CD4-positive, alpha-beta T cell (primary cell): ENCODE measurements at regions of chr6 and their contacts with region 1.

Region 1: GRCh38 chr6:30730601-30731435 is 10.7 kb downstream of the TUBB start:
- DNase-seq: peak; percentile 74 to 92 (median 84)
- ATAC-seq: peak; percentile 99
- H3K4me3 ChIP-seq: peak overlapping the region; percentile 25
- H3K4me3 Mint-ChIP-seq: peak overlapping the region; percentile 50
- H3K27ac ChIP-seq: peak overlapping the region in 1 of 2 donors; percentile 14
- H3K27ac Mint-ChIP-seq: peak overlapping the region; percentile 67
- H3K4me1 ChIP-seq: peaks cover 36% of the 10 kb centered on the region
- H3K4me1 Mint-ChIP-seq: peaks cover 46% of the 10 kb centered on the region
- H3K27me3 ChIP-seq: no peaks in the 10 kb centered on the region
- H3K27me3 Mint-ChIP-seq: no peaks in the 10 kb centered on the region
- CTCF ChIP-seq: peak; percentile 84

Region 2: DNA sequence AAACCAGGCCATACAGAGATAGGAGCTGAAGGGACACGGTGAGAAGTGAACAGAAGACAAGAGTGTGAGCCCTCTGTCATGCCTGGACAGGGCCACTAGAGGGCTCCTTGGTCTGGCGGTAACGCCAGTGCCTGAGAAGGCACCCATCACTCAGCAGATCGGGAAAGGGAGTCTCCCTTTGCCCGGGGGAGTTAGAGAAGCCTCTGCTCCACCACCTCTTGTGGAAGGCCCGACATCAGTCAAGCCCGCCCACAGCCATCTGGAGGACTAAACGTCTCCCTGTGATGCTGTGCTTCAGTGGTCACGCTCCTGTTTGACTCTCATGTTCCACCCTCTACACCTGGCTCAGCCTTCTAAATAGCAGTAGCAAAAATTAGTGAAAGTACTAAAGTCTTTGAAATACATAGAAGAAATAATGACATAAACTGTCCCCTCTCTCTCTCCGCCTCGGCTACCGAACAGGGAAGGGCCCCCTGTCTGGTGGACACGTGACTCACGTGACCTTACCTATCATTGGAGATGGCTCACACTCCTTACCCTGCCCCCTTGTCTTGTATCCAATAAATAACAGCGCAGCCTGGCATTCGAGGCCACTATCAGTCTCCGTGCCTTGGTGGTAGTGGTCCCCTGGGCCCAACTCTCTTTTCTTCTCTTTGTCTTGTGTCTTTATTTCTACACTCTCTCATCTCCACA is 319.2 kb before region 1 on chr6:
- CTCF ChIA-PET with region 1: interaction called, 3 read pairs
- POLR2A ChIA-PET with region 1: no interaction called
- intact Hi-C with region 1: loop called in 1 of 2 experiments (anchors 2 kb)
- DNase-seq: peak; percentile 32 to 77 (median 52)
- ATAC-seq: peak; percentile 63
- H3K4me3 ChIP-seq: no peak overlapping the region
- H3K4me3 Mint-ChIP-seq: no peak overlapping the region
- H3K27ac ChIP-seq: no peak overlapping the region
- H3K27ac Mint-ChIP-seq: no peak overlapping the region
- H3K4me1 ChIP-seq: peaks cover 4% of the 10 kb centered on the region
- H3K4me1 Mint-ChIP-seq: peaks cover 7% of the 10 kb centered on the region
- H3K27me3 ChIP-seq: peaks cover 0 to 31% of the 10 kb centered on the region in 2 experiments
- H3K27me3 Mint-ChIP-seq: peaks cover 70% of the 10 kb centered on the region
- CTCF ChIP-seq: peak; percentile 76

Region 3: DNA sequence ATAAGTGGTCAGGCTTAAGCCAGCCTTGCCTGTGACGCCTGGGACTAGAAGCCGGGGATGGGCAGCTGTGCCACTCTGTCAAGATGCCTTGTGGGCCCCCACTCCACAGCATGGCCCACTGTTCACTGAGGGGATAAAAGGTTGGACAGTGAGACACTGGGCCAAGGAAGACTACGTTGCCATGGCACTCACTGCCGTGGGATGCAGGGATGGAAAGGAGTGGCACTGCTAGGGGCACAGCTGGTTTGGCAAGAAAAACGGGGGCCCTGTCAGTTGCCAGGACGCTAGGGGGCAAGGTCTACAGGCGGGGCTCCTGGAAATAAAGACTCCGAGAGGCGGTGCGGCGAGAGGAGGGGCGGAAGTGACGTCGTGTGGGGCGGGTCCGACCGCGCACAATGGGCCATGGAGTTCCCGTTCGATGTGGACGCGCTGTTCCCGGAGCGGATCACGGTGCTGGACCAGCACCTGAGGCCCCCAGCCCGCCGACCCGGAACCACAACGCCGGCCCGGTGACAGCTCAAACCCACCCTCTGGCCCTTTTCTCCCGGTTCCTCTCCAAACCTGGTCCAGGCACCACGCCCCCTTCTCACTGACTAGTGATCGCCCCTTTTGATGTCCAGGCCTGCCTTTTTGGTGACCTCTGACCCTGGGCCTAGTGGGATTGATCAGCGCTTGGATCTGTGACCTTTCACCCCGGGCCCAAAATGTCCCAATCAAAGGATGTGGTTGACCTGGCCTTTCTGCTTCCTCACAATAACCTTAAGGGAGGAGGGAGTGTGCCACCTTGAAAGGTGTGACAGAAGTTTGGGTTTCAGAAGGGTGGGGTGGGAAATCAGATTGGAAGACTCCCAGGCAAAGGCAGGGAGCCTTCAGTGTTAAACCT is 104.1 kb before region 1 on chr6 and contains the start of gene ATAT1:
- CTCF ChIA-PET with region 1: interaction called, 28 read pairs
- POLR2A ChIA-PET with region 1: no interaction called
- intact Hi-C with region 1: no loop called
- DNase-seq: peak; percentile 77 to 95 (median 86)
- ATAC-seq: peak; percentile 99
- H3K4me3 ChIP-seq: peak within 1 kb of the TSS; percentile 81
- H3K4me3 Mint-ChIP-seq: peak within 1 kb of the TSS; percentile 92
- H3K27ac ChIP-seq: peak within 1 kb of the TSS; percentile 68 to 91
- H3K27ac Mint-ChIP-seq: peak within 1 kb of the TSS; percentile 93
- H3K4me1 ChIP-seq: peaks cover 16% of the 10 kb centered on the region
- H3K4me1 Mint-ChIP-seq: peaks cover 20% of the 10 kb centered on the region
- H3K27me3 ChIP-seq: no peaks in the 10 kb centered on the region
- H3K27me3 Mint-ChIP-seq: no peaks in the 10 kb centered on the region
- CTCF ChIP-seq: peak; percentile 64
- total RNA-seq, gene ATAT1: 4.1 to 5.2 TPM

Region 4: GRCh38 chr6:30678964-30679726 is 51.7 kb before region 1 on chr6:
- CTCF ChIA-PET with region 1: interaction called, 526 read pairs
- POLR2A ChIA-PET with region 1: interaction called, 381 read pairs
- intact Hi-C with region 1: loop called in 1 of 2 experiments (anchors 2 kb)
- DNase-seq: peak; percentile 84 to 96 (median 94)
- ATAC-seq: peak; percentile 41
- H3K4me3 ChIP-seq: peak overlapping the region; percentile 99
- H3K4me3 Mint-ChIP-seq: peak overlapping the region; percentile 98
- H3K27ac ChIP-seq: peak overlapping the region; percentile 41 to 98
- H3K27ac Mint-ChIP-seq: peak overlapping the region; percentile 94
- H3K4me1 ChIP-seq: peaks cover 49% of the 10 kb centered on the region
- H3K4me1 Mint-ChIP-seq: peaks cover 47% of the 10 kb centered on the region
- H3K27me3 ChIP-seq: no peaks in the 10 kb centered on the region
- H3K27me3 Mint-ChIP-seq: no peaks in the 10 kb centered on the region
- CTCF ChIP-seq: peak; percentile 91

Region 5: DNA sequence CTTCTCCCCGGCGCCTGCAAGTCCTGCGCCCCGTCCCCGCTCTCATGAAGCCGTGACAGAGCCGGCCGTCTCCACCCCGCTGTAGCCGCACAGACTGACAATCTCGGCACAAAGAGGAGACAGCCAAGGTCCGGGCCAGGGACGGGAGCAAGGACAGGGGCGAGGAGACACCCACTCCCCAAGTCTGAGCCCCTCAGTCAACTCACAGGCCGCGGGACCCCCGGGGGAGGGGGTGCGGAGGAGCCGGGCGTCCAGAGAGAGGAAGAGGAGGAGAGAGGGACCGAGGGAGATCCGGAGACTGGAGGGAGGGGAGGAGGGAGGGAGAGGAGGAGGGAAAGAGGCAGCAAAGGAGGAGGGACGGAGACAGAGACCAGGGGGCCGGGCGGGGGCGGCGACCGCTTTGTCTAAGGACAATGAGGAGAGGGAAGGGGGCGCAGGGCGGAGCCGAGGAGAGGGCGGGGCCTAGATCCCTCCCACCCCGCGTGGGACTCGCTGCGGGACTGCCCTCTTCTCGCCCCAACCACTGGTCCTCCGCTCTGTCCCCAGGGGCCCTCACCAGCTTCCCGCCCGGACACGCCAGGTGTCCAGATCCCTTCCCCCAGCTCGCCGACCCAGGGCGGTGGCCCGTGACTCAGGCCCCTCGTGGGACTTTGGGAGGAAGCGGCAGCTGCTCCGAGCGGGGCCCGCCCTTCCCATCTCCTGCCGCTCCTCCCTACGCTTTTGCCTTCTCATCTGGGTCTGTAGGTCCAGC is 43.7 kb before region 1 on chr6:
- CTCF ChIA-PET with region 1: interaction called, 526 read pairs
- POLR2A ChIA-PET with region 1: interaction called, 381 read pairs
- intact Hi-C with region 1: no loop called
- DNase-seq: peak; percentile 44 to 84 (median 64)
- ATAC-seq: peak; percentile 19
- H3K4me3 ChIP-seq: peak overlapping the region; percentile 99
- H3K4me3 Mint-ChIP-seq: peak overlapping the region; percentile 98
- H3K27ac ChIP-seq: peak overlapping the region; percentile 96 to 98
- H3K27ac Mint-ChIP-seq: peak overlapping the region; percentile 94
- H3K4me1 ChIP-seq: peaks cover 50% of the 10 kb centered on the region
- H3K4me1 Mint-ChIP-seq: peaks cover 57% of the 10 kb centered on the region
- H3K27me3 ChIP-seq: no peaks in the 10 kb centered on the region
- H3K27me3 Mint-ChIP-seq: no peaks in the 10 kb centered on the region
- CTCF ChIP-seq: no peak

Region 6: DNA sequence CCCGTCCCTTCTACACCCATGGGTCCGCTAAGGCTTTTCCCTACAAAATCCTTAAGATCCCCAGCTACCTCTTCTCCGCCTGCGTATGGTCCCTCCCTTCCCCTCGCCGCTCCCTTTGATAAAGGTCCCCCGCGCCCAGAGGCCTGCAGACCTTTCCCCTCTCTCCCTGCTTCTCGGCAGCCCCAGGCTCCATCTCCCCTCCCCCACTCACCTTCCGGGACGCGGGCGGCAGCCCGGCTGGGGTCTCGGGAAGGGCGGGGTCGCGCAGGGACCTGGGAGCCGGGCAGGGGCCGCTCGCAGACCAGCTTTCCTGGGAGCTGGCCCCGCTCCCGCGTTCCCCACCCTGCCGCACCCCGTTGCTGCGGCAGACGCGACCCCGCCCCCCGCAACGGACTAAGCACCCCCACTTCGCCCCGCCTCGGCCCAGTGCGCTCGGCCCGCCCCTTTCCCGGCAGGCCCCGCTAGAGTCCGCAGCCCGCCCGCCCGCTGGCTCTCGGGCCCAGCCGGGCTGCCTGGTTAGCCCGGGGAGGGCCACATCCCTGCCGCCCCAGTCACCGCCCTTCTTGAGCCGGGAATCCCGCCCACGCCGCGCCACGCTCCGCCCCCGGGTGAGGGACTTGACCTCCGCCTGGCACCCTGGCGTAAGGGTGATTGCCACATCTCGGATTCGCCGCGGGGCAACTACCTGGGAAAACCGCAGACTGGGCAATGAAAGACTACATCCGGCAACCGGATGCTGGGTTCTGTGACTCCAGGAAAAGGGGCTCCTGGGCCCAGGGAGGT is 11.7 kb after region 1 on chr6 and contains the start of gene FLOT1:
- CTCF ChIA-PET with region 1: interaction called, 14 read pairs
- POLR2A ChIA-PET with region 1: interaction called, 54 read pairs
- intact Hi-C with region 1: no loop called
- DNase-seq: peak; percentile 52 to 93 (median 76)
- ATAC-seq: peak; percentile 53
- H3K4me3 ChIP-seq: peak within 1 kb of the TSS; percentile 85
- H3K4me3 Mint-ChIP-seq: peak within 1 kb of the TSS; percentile 97
- H3K27ac ChIP-seq: peak within 1 kb of the TSS; percentile 31 to 76
- H3K27ac Mint-ChIP-seq: peak within 1 kb of the TSS; percentile 91
- H3K4me1 ChIP-seq: peaks cover 66% of the 10 kb centered on the region
- H3K4me1 Mint-ChIP-seq: peaks cover 61% of the 10 kb centered on the region
- H3K27me3 ChIP-seq: no peaks in the 10 kb centered on the region
- H3K27me3 Mint-ChIP-seq: no peaks in the 10 kb centered on the region
- CTCF ChIP-seq: no peak
- total RNA-seq, gene FLOT1: 31.6 TPM

Region 7: GRCh38 chr6:30759575-30760239 is 28.9 kb after region 1 on chr6:
- CTCF ChIA-PET with region 1: no interaction called
- POLR2A ChIA-PET with region 1: no interaction called
- intact Hi-C with region 1: loop called in 1 of 2 experiments (anchors 1 kb)
- DNase-seq: no peak
- ATAC-seq: no peak
- H3K4me3 ChIP-seq: no peak overlapping the region
- H3K4me3 Mint-ChIP-seq: no peak overlapping the region
- H3K27ac ChIP-seq: no peak overlapping the region
- H3K27ac Mint-ChIP-seq: no peak overlapping the region
- H3K4me1 ChIP-seq: peaks cover 11% of the 10 kb centered on the region
- H3K4me1 Mint-ChIP-seq: peaks cover 23% of the 10 kb centered on the region
- H3K27me3 ChIP-seq: no peaks in the 10 kb centered on the region
- H3K27me3 Mint-ChIP-seq: no peaks in the 10 kb centered on the region
- CTCF ChIP-seq: no peak

Region 8: DNA sequence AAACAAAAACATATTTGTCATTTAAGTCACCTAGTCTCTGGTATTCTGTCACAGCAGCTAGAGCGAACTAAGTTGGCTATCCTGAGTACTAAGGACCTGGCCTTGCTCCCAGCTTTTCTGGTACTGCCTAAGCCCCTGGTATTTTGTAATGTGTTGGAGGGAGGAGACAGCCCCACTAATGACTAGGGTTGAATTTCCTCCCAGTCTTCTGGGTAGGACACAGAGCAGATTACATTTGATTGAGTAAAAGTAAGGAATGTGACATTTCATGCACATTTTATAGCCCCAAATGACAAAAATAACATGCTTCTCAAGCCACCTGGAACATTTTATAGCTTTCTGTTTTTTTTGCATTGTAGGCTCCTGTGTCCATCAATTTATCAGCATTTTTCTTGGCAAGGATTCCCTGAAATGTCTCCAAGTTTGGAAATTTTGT is 105.6 kb after region 1 on chr6:
- CTCF ChIA-PET with region 1: no interaction called
- POLR2A ChIA-PET with region 1: no interaction called
- intact Hi-C with region 1: no loop called
- DNase-seq: no peak
- ATAC-seq: no peak
- H3K4me3 ChIP-seq: no peak overlapping the region
- H3K4me3 Mint-ChIP-seq: no peak overlapping the region
- H3K27ac ChIP-seq: no peak overlapping the region
- H3K27ac Mint-ChIP-seq: no peak overlapping the region
- H3K4me1 ChIP-seq: peaks cover 37% of the 10 kb centered on the region
- H3K4me1 Mint-ChIP-seq: peaks cover 25% of the 10 kb centered on the region
- H3K27me3 ChIP-seq: no peaks in the 10 kb centered on the region
- H3K27me3 Mint-ChIP-seq: no peaks in the 10 kb centered on the region
- CTCF ChIP-seq: no peak